ENCODE measurements at regions of chr5 and their contacts with region 1.

Region 1: GRCh38 chr5:114449860-114450421 is 88.1 kb downstream of the KCNN2 start:
- DNase-seq: peak; percentile 23
- H3K4me3 ChIP-seq: no peak overlapping the region
- H3K27ac ChIP-seq: no peak overlapping the region
- H3K27me3 ChIP-seq: peaks cover 2% of the 10 kb centered on the region
- CTCF ChIP-seq: peak; percentile 88

Region 2: GRCh38 chr5:113612060-113612496 is 837.9 kb before region 1 on chr5:
- CTCF ChIA-PET with region 1: interaction called, 51 read pairs
- POLR2A ChIA-PET with region 1: no interaction called
- DNase-seq: peak; percentile 6
- H3K4me3 ChIP-seq: no peak overlapping the region
- H3K27ac ChIP-seq: no peak overlapping the region
- H3K27me3 ChIP-seq: no peaks in the 10 kb centered on the region
- CTCF ChIP-seq: peak; percentile 68

Region 3: GRCh38 chr5:114101153-114101552 is 348.8 kb before region 1 on chr5:
- CTCF ChIA-PET with region 1: interaction called, 60 read pairs
- POLR2A ChIA-PET with region 1: no interaction called
- DNase-seq: peak; percentile 20
- H3K4me3 ChIP-seq: no peak overlapping the region
- H3K27ac ChIP-seq: no peak overlapping the region
- H3K27me3 ChIP-seq: no peaks in the 10 kb centered on the region
- CTCF ChIP-seq: peak; percentile 72

Region 4: DNA sequence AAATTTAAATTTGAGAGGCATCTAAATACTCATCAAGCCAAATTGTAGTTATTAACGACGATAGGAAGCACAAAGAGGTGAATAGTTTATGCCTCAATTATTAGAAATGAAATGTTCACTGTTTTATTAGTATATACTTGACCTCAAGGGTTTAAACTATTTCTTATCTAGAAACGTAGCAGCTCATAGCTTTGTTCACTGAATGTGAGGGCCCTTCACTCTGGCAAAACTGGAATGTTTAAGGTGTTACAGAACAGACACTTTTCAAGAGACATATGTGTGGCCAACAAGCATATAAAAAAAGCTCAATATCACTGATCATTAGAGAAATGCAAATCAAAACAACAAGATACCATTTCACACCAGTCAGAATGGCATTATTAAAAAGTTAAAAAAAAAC is 239.3 kb before region 1 on chr5:
- CTCF ChIA-PET with region 1: no interaction called
- POLR2A ChIA-PET with region 1: no interaction called
- DNase-seq: no peak
- H3K4me3 ChIP-seq: no peak overlapping the region
- H3K27ac ChIP-seq: no peak overlapping the region
- H3K27me3 ChIP-seq: no peaks in the 10 kb centered on the region
- CTCF ChIP-seq: no peak

Region 5: DNA sequence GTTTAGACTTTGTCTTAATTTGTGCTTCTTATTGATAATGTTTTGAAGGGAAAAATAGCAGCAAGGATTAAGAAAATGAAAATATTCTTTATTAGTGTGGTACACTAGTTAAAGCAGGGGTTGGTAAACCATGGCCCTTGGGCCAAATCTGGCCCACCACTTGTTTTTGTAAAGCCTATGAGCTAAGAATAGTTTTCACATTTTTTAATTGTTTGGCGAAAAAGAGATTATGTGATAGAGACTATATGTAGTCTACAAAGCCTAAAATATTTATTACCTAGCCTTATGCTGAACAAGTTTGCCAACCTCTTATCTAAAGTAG is 30.9 kb before region 1 on chr5:
- CTCF ChIA-PET with region 1: interaction called, 22 read pairs
- POLR2A ChIA-PET with region 1: no interaction called
- DNase-seq: no peak
- H3K4me3 ChIP-seq: no peak overlapping the region
- H3K27ac ChIP-seq: no peak overlapping the region
- H3K27me3 ChIP-seq: no peaks in the 10 kb centered on the region
- CTCF ChIP-seq: no peak

Region 6: GRCh38 chr5:114473541-114473940 is 23.6 kb after region 1 on chr5:
- CTCF ChIA-PET with region 1: no interaction called
- POLR2A ChIA-PET with region 1: no interaction called
- DNase-seq: no peak
- H3K4me3 ChIP-seq: no peak overlapping the region
- H3K27ac ChIP-seq: no peak overlapping the region
- H3K27me3 ChIP-seq: no peaks in the 10 kb centered on the region
- CTCF ChIP-seq: no peak

Region 7: GRCh38 chr5:114500756-114501155 is 50.8 kb after region 1 on chr5:
- CTCF ChIA-PET with region 1: no interaction called
- POLR2A ChIA-PET with region 1: no interaction called
- DNase-seq: no peak
- H3K4me3 ChIP-seq: no peak overlapping the region
- H3K27ac ChIP-seq: no peak overlapping the region
- H3K27me3 ChIP-seq: no peaks in the 10 kb centered on the region
- CTCF ChIP-seq: no peak

Region 8: GRCh38 chr5:114678778-114679177 is 228.8 kb after region 1 on chr5:
- CTCF ChIA-PET with region 1: no interaction called
- POLR2A ChIA-PET with region 1: no interaction called
- DNase-seq: no peak
- H3K4me3 ChIP-seq: no peak overlapping the region
- H3K27ac ChIP-seq: no peak overlapping the region
- H3K27me3 ChIP-seq: no peaks in the 10 kb centered on the region
- CTCF ChIP-seq: no peak

Measured in AG04450 (cell line).